Activated CD4-positive, alpha-beta memory T cell treated with anti-CD3 and anti-CD28 coated beads, Interleukin-2, amount 10 ng/mL, durations not matched to agents 7 days and 5 days (primary cell): ENCODE measurements at regions of chr6 and their contacts with region 1.

Region 1: GRCh38 chr6:149551920-149552319 is 6.1 kb upstream of the PPIL4 start:
- DNase-seq: no peak
- H3K4me3 Mint-ChIP-seq: no peak overlapping the region
- H3K27ac Mint-ChIP-seq: no peak overlapping the region
- H3K4me1 Mint-ChIP-seq: peaks cover 6% of the 10 kb centered on the region
- H3K27me3 Mint-ChIP-seq: peaks cover 33% of the 10 kb centered on the region

Region 2: DNA sequence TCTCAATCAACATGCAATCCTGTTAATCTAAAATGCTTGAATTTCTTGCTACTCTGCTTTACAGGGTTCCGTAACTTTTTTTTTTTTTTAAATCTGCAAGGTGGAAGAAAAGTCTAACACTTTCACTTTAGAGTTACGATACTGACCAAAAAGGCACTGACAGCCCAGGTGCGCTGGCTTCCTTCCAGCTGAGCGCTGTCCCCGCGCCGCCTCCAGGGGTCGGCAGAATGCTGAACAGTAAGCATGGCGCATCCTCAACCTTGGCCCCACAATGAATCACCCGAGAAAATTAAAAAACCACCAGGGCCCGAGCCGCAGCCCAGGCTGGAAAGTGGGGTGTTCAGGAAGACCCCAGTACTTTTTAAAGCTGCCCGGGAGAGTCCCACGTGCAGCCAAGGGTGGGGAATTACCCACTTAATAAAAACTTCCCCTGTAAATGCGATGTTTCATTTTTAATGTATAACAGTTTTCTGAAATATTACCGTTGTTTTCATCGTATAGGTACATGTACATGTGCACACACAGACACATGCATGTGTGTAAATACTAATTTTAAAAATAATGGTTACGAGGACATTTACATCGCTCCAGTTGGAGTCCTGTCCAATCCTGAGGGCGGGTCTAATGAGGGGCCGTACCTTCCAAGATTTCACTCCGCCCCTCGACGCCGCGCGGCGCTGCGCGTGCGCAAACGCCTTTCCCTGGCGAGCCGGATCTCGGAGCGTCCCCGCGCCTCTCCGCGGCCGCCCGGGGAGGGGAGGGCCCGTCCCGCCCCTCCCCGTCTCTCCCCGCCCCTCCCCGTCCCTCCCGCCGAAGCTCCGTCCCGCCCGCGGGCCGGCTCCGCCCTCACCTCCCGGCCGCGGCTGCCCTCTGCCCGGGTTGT is 13.8 kb after region 1 on chr6 and contains the start of gene GINM1:
- CTCF ChIA-PET with region 1: interaction called, 55 read pairs
- POLR2A ChIA-PET with region 1: interaction called, 18 read pairs
- DNase-seq: peak; percentile 97
- H3K4me3 Mint-ChIP-seq: peak within 1 kb of the TSS; percentile 87
- H3K27ac Mint-ChIP-seq: peak within 1 kb of the TSS; percentile 85
- H3K4me1 Mint-ChIP-seq: peaks cover 22% of the 10 kb centered on the region
- H3K27me3 Mint-ChIP-seq: peaks cover 6% of the 10 kb centered on the region
- total RNA-seq, gene GINM1: 18.1 to 18.4 TPM

Region 3: DNA sequence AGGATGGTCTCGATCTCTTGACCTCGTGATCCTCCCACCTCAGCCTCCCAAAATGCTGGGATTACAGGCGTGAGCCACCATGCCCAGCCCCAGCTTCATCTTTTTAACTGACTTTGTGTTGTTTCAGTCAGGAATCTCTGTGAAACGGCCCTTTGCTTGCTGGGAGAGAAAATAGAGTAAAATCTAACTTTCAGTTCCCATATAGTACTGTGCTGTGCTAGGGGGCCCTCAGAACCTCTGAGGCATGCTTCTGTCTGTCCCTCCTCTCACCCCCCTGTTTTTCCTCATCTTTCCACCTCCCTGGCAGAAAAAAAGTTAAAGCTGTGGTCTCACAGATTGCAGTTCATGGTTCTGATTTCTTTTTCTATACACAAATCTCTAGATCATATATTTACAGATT is 263.9 kb after region 1 on chr6:
- CTCF ChIA-PET with region 1: no interaction called
- POLR2A ChIA-PET with region 1: no interaction called
- DNase-seq: no peak
- H3K4me3 Mint-ChIP-seq: no peak overlapping the region
- H3K27ac Mint-ChIP-seq: no peak overlapping the region
- H3K4me1 Mint-ChIP-seq: peaks cover 2% of the 10 kb centered on the region
- H3K27me3 Mint-ChIP-seq: no peaks in the 10 kb centered on the region